CD4-positive, alpha-beta memory T cell (primary cell): ENCODE measurements at regions of chr19 and their contacts with region 1.

Region 1: DNA sequence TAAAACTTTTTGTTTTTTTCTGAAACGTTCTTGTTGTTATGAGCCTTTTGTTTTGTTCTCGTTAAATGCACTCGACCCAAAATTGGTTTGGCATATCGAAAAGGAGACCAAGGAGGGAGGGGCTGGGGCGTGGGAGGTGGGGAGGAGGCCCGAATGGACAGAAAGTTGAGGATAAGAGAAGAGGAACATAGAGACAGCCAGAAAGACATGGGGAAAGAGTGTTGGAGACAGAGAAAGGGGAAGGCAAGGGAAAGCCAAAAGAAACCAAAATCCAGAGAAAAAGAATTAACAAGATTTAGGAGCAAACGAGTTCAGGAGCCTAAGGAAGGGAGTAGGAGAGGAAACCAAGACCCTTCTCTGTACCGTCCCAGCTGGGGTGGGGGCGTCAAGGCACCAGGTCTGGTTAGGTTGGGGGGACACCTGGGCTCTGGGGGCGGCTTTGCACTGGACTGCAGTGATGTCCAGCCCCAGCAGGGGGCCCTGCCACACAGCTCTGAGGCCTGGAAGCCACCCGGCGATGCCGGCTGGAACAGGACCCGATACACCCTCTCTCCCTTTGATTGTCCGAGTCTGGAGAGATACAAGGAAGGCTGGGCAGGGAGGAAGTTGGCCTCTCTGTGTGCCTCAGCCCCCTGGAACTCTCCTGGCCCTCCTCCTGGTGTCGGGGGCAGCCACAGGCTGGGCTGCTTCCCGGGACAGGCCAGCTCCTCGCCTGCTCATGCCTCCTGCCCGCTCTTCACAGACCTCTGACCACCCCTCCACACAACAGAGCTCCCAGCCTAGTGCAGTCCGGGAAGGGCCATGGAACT is 11.6 kb upstream of the ASF1B start:
- DNase-seq: peak in 4 of 5 donors; percentile 35 to 47 (median 41)
- H3K4me3 ChIP-seq: no peak overlapping the region
- H3K4me3 Mint-ChIP-seq: peak overlapping the region in 7 of 8 donors; percentile 51 to 68 (median 62)
- H3K27ac ChIP-seq: peak overlapping the region; percentile 74
- H3K27ac Mint-ChIP-seq: peak overlapping the region; percentile 90 to 99 (median 97)
- H3K4me1 ChIP-seq: peaks cover 36% of the 10 kb centered on the region
- H3K4me1 Mint-ChIP-seq: peaks cover 15 to 43% (median 28%) of the 10 kb centered on the region in 4 donors
- H3K27me3 ChIP-seq: no peaks in the 10 kb centered on the region
- H3K27me3 Mint-ChIP-seq: no peaks in the 10 kb centered on the region

Region 2: DNA sequence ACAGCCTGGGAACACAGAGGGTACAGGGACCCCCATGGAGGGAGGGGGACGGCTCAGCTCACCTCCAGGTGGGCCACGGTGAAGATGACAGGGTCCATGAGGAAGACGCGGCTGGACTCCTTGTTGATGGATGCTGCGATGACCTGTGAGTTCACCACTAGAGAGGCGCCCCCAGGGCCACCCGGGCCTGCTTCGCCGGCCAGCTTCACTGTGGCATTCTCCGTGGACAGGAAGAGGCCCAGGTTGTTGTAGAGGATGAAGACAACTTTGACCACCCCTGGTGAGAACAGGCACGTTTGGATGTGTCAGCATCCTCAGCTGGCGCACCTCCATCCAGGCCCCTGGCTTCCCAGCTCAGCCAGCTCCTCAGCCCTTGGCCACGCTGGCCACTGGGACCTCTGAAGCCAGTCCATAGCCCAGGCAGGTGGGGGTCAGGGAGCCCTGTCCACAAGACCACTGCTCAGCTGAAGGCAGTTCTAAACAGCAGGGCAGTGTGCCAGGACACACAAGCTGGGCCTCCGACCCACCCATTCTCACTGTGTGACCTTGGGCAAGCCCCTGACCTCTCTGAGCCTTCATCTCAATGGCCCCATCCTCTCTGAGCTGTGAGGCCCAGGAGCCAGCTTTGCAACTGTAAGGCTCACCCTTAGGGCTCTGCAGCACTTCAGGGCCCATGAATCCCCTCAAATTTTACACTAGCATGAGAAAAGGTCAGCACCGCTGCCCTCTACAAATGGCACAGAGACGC is 10.4 kb after region 1 on chr19:
- CTCF ChIA-PET with region 1: interaction called, 4 read pairs
- POLR2A ChIA-PET with region 1: interaction called, 13 read pairs
- intact Hi-C with region 1: no loop called
- DNase-seq: no peak
- H3K4me3 ChIP-seq: no peak overlapping the region
- H3K4me3 Mint-ChIP-seq: no peak overlapping the region
- H3K27ac ChIP-seq: no peak overlapping the region
- H3K27ac Mint-ChIP-seq: no peak overlapping the region
- H3K4me1 ChIP-seq: no peaks in the 10 kb centered on the region
- H3K4me1 Mint-ChIP-seq: peaks cover 0 to 4% (median under 1%) of the 10 kb centered on the region in 4 donors
- H3K27me3 ChIP-seq: no peaks in the 10 kb centered on the region
- H3K27me3 Mint-ChIP-seq: no peaks in the 10 kb centered on the region

Region 3: DNA sequence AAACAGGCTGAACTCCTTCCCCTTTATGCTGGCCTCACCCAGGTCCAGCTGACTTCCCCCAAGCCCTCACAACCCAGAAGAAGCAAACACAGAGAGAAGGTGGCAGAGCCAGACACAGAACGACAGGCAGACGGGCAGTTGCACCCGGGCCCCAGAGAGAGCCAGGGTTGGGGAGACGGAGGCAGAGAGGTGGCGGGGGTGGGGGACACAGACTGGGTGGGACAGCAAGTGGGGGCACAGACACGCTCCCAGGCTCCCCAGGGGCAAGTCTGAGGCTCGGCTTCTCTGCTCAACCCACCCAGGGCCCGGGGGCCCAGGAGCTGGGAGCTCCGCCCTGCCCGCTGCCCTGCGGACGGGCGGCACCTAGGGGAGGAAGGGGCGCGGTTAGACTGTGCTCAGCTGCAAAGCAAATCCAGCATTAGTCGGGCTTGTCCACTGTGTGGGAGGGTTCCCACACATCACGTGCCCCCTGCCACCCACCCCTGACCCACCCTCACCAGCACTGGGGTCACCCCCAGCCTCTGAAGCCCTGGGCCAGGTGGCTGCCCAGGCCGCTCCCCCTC is 19.7 kb after region 1 on chr19:
- CTCF ChIA-PET with region 1: interaction called, 8 read pairs
- POLR2A ChIA-PET with region 1: interaction called, 33 read pairs
- intact Hi-C with region 1: loop called (anchors 1 kb)
- DNase-seq: peak; percentile 26 to 42 (median 32)
- H3K4me3 ChIP-seq: peak overlapping the region in 1 of 2 donors; percentile 44
- H3K4me3 Mint-ChIP-seq: peak overlapping the region; percentile 81 to 92 (median 88)
- H3K27ac ChIP-seq: peak overlapping the region; percentile 61
- H3K27ac Mint-ChIP-seq: peak overlapping the region; percentile 87 to 97 (median 93)
- H3K4me1 ChIP-seq: peaks cover 26% of the 10 kb centered on the region
- H3K4me1 Mint-ChIP-seq: peaks cover 17 to 30% (median 23%) of the 10 kb centered on the region in 4 donors
- H3K27me3 ChIP-seq: no peaks in the 10 kb centered on the region
- H3K27me3 Mint-ChIP-seq: no peaks in the 10 kb centered on the region

Region 4: GRCh38 chr19:14248578-14249011 is 100.6 kb after region 1 on chr19:
- CTCF ChIA-PET with region 1: no interaction called
- POLR2A ChIA-PET with region 1: no interaction called
- intact Hi-C with region 1: no loop called
- DNase-seq: peak; percentile 15 to 46 (median 27)
- H3K4me3 ChIP-seq: peak overlapping the region in 1 of 2 donors; percentile 45
- H3K4me3 Mint-ChIP-seq: peak overlapping the region; percentile 53 to 76 (median 64)
- H3K27ac ChIP-seq: peak overlapping the region; percentile 26
- H3K27ac Mint-ChIP-seq: peak overlapping the region in 3 of 7 donors; percentile 19 to 60 (median 46)
- H3K4me1 ChIP-seq: peaks cover 11% of the 10 kb centered on the region
- H3K4me1 Mint-ChIP-seq: peaks cover 0 to 22% (median 12%) of the 10 kb centered on the region in 4 donors
- H3K27me3 ChIP-seq: no peaks in the 10 kb centered on the region
- H3K27me3 Mint-ChIP-seq: peaks cover 0 to 1% of the 10 kb centered on the region in 2 donors